ENCODE measurements at regions of chr11 and their contacts with region 1.

Region 1: GRCh38 chr11:64652586-64653387 is 61.8 kb downstream of the SLC22A12 start:
- DNase-seq: peak; percentile 83
- ATAC-seq: peak; percentile 82

Region 2: DNA sequence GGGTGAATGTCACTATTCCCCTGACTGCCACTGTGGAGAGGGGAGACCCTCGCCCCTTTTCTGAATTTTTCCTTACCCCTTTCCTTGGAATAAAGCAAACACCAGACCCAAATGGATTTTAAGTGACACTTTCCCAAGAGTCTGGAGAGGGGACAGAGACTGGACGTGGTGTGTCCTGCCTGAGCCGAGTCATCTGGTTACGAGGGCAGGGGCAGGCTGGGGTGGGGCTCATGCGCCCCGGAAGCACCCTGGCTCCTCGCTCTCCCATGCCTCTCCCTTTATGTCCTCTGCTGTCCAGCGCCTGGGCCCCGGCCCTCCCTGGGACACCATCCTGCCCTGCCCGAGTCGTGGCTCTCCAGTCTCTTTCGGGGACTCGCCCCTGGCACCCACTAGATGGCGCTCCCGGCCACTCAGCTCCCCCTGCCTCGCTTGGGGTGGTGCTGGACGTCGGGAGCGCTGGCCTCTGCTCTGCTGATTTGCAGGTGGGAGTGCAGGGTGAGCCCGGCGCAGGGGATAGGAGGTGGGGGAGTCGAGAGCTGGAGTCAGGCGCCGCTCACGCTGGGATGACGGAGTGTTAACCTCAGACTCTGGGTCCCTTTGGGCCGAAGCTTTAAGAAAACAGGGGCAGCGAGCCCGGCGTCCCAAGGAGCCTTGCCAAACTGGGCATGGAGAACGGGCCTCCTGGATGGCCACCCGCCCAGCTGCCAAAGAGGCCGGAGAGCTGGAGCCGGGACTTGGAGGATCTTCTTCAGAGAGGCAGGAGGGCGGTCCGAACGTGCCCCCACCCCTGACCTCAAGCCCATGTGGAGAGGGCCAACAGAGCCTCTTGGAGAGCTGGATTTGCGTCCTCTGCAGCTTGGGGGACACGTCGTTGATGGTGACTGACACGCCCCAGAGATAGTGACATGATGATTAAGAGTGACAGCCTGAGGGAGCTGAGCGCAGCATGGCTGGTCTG is 203.9 kb before region 1 on chr11:
- intact Hi-C with region 1: loop called (anchors 2 kb)
- DNase-seq: peak; percentile 91
- ATAC-seq: peak; percentile 99

Region 3: DNA sequence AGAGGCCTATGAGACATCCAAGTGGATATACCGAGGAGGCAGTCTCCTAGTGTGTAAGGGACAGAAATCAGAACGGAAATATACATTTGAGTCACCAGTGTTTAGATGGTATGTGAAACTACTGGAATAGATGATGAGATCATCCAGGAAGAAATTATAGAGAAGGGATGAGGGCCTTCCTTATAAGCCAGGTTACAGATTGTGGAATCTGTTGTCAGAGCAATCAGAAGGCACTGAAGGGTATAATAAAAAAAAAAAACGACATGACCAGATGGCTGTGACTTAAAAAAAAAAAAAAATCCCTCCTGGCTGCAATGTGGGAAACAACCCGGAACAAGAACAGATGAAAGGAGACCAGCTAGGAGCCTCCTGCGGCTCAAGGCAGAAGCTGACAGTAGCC is 316.4 kb after region 1 on chr11:
- intact Hi-C with region 1: no loop called
- DNase-seq: no peak
- ATAC-seq: no peak

Measured in Right ventricle myocardium superior (tissue), 1 donor.